Activated CD4-positive, alpha-beta T cell treated with anti-CD3 and anti-CD28 coated beads, Interleukin-2, amount 10 ng/mL, durations not matched to agents 24 days and 14 days (primary cell): ENCODE measurements at regions of chr1 and their contacts with region 1.

Region 1: DNA sequence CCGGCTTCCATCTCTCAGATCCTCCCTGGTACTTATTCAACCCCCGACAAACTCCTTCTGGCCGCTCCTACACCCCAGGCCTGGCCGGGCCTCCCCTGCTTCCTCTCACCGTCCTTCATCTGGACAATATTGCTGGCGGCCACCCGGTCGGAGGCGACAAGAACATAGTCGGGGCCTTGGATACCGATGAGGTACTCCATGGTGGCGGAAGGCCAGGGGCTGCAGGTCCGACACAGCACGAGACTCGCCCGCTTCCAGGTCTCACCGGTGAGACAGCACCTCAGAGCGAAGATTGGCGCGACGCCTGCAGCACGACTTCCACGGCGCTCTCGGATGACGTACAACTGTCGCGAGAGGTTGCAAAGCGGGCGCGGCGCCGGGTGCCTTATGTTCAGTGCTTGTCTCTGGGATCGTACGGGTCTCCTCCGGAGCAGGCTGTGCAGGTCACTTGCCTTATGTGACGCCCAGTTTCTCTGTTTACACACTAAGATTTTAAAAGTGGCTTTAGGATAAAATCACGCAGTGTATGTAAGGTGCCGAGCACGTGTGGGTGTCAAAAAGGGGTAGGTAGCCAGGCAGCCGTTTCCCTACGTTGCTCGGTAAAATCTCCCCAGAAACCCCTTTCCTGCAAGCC is at the start of gene PSMB2:
- DNase-seq: peak; percentile 99
- H3K4me3 Mint-ChIP-seq: peak within 1 kb of the TSS; percentile 100
- H3K27ac Mint-ChIP-seq: peak within 1 kb of the TSS; percentile 99
- H3K4me1 Mint-ChIP-seq: peaks cover 23% of the 10 kb centered on the region
- H3K27me3 Mint-ChIP-seq: peaks cover 26% of the 10 kb centered on the region
- total RNA-seq, gene PSMB2: 133 TPM in 2 replicates

Region 2: GRCh38 chr1:35557292-35558063 is 83.9 kb before region 1 on chr1 and contains the starts of genes KIAA0319L and NCDN:
- intact Hi-C with region 1: no loop called
- DNase-seq: peak; percentile 98
- H3K4me3 Mint-ChIP-seq: peak within 1 kb of the TSS; percentile 98
- H3K27ac Mint-ChIP-seq: peak within 1 kb of the TSS; percentile 98
- H3K4me1 Mint-ChIP-seq: peaks cover 47% of the 10 kb centered on the region
- H3K27me3 Mint-ChIP-seq: no peaks in the 10 kb centered on the region
- total RNA-seq, gene KIAA0319L: 35.2 and 35.3 TPM in 2 replicates
- total RNA-seq, gene NCDN: 33.5 and 34.0 TPM in 2 replicates

Region 3: DNA sequence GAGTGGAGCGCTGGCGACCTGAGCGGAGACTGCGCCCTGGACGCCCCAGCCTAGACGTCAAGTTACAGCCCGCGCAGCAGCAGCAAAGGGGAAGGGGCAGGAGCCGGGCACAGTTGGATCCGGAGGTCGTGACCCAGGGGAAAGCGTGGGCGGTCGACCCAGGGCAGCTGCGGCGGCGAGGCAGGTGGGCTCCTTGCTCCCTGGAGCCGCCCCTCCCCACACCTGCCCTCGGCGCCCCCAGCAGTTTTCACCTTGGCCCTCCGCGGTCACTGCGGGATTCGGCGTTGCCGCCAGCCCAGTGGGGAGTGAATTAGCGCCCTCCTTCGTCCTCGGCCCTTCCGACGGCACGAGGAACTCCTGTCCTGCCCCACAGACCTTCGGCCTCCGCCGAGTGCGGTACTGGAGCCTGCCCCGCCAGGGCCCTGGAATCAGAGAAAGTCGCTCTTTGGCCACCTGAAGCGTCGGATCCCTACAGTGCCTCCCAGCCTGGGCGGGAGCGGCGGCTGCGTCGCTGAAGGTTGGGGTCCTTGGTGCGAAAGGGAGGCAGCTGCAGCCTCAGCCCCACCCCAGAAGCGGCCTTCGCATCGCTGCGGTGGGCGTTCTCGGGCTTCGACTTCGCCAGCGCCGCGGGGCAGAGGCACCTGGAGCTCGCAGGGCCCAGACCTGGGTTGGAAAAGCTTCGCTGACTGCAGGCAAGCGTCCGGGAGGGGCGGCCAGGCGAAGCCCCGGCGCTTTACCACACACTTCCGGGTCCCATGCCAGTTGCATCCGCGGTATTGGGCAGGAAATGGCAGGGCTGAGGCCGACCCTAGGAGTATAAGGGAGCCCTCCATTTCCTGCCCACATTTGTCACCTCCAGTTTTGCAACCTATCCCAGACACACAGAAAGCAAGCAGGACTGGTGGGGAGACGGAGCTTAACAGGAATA is 64.0 kb before region 1 on chr1:
- intact Hi-C with region 1: loop called (anchors 5 kb)
- DNase-seq: peak; percentile 89
- H3K4me3 Mint-ChIP-seq: peak overlapping the region; percentile 68
- H3K27ac Mint-ChIP-seq: peak overlapping the region; percentile 65
- H3K4me1 Mint-ChIP-seq: peaks cover 17% of the 10 kb centered on the region
- H3K27me3 Mint-ChIP-seq: peaks cover 20% of the 10 kb centered on the region

Region 4: GRCh38 chr1:35715568-35716002 is 74.2 kb after region 1 on chr1:
- intact Hi-C with region 1: loop called (anchors 2 kb)
- DNase-seq: peak; percentile 94
- H3K4me3 Mint-ChIP-seq: peak overlapping the region; percentile 65
- H3K27ac Mint-ChIP-seq: no peak overlapping the region
- H3K4me1 Mint-ChIP-seq: peaks cover 36% of the 10 kb centered on the region
- H3K27me3 Mint-ChIP-seq: no peaks in the 10 kb centered on the region